Endothelial cell of umbilical vein (primary cell): ENCODE measurements at regions of chr12 and their contacts with region 1.

Region 1: GRCh38 chr12:119780786-119781434 is 96.2 kb downstream of the CIT start:
- DNase-seq: peak; percentile 67
- H3K4me3 ChIP-seq: no peak overlapping the region
- H3K27ac ChIP-seq: no peak overlapping the region
- H3K4me1 ChIP-seq: no peaks in the 10 kb centered on the region
- H3K27me3 ChIP-seq: no peaks in the 10 kb centered on the region
- CTCF ChIP-seq: peak; percentile 69 to 79
- POLR2A ChIP-seq: no peak

Region 2: GRCh38 chr12:119667577-119668323 is 113.2 kb before region 1 on chr12 and contains the start of gene PRKAB1:
- CTCF ChIA-PET with region 1: interaction called, 40 read pairs
- POLR2A ChIA-PET with region 1: no interaction called
- dilution Hi-C with region 1: no loop called
- intact Hi-C with region 1: loop called (anchors 1 kb)
- DNase-seq: peak; percentile 93
- H3K4me3 ChIP-seq: peak within 1 kb of the TSS; percentile 69 to 84 (median 76)
- H3K27ac ChIP-seq: peak within 1 kb of the TSS; percentile 32
- H3K4me1 ChIP-seq: peaks cover 26% of the 10 kb centered on the region
- H3K27me3 ChIP-seq: no peaks in the 10 kb centered on the region
- CTCF ChIP-seq: peak; percentile 90 to 98
- POLR2A ChIP-seq: peak; percentile 46
- total RNA-seq, gene PRKAB1: 21.9 and 23.1 TPM in 2 replicates

Region 3: GRCh38 chr12:119681961-119682638 is 98.8 kb before region 1 on chr12:
- CTCF ChIA-PET with region 1: interaction called, 12 read pairs
- POLR2A ChIA-PET with region 1: no interaction called
- dilution Hi-C with region 1: no loop called
- intact Hi-C with region 1: no loop called
- DNase-seq: no peak
- H3K4me3 ChIP-seq: no peak overlapping the region
- H3K27ac ChIP-seq: no peak overlapping the region
- H3K4me1 ChIP-seq: no peaks in the 10 kb centered on the region
- H3K27me3 ChIP-seq: no peaks in the 10 kb centered on the region
- CTCF ChIP-seq: no peak
- POLR2A ChIP-seq: no peak

Region 4: GRCh38 chr12:119695034-119695433 is 85.9 kb before region 1 on chr12:
- CTCF ChIA-PET with region 1: interaction called, 85 read pairs
- POLR2A ChIA-PET with region 1: no interaction called
- dilution Hi-C with region 1: no loop called
- intact Hi-C with region 1: loop called (anchors 1 kb)
- DNase-seq: no peak
- H3K4me3 ChIP-seq: no peak overlapping the region
- H3K27ac ChIP-seq: no peak overlapping the region
- H3K4me1 ChIP-seq: peaks cover 30% of the 10 kb centered on the region
- H3K27me3 ChIP-seq: no peaks in the 10 kb centered on the region
- CTCF ChIP-seq: peak; percentile 47 to 65
- POLR2A ChIP-seq: no peak

Region 5: GRCh38 chr12:119791453-119791852 is 10.5 kb after region 1 on chr12:
- CTCF ChIA-PET with region 1: interaction called, 13 read pairs
- POLR2A ChIA-PET with region 1: no interaction called
- dilution Hi-C with region 1: no loop called
- intact Hi-C with region 1: no loop called
- DNase-seq: no peak
- H3K4me3 ChIP-seq: no peak overlapping the region
- H3K27ac ChIP-seq: no peak overlapping the region
- H3K4me1 ChIP-seq: no peaks in the 10 kb centered on the region
- H3K27me3 ChIP-seq: no peaks in the 10 kb centered on the region
- CTCF ChIP-seq: no peak
- POLR2A ChIP-seq: no peak

Region 6: GRCh38 chr12:119843100-119843499 is 62.2 kb after region 1 on chr12:
- CTCF ChIA-PET with region 1: no interaction called
- POLR2A ChIA-PET with region 1: no interaction called
- dilution Hi-C with region 1: no loop called
- intact Hi-C with region 1: no loop called
- DNase-seq: no peak
- H3K4me3 ChIP-seq: no peak overlapping the region
- H3K27ac ChIP-seq: no peak overlapping the region
- H3K4me1 ChIP-seq: no peaks in the 10 kb centered on the region
- H3K27me3 ChIP-seq: no peaks in the 10 kb centered on the region
- CTCF ChIP-seq: no peak
- POLR2A ChIP-seq: no peak